Activated CD4-positive, alpha-beta T cell treated with anti-CD3 and anti-CD28 coated beads, Interleukin-2, amount 10 ng/mL, durations not matched to agents 24 days and 14 days (primary cell): ENCODE measurements at regions of chr5 and their contacts with region 1.

Region 1: DNA sequence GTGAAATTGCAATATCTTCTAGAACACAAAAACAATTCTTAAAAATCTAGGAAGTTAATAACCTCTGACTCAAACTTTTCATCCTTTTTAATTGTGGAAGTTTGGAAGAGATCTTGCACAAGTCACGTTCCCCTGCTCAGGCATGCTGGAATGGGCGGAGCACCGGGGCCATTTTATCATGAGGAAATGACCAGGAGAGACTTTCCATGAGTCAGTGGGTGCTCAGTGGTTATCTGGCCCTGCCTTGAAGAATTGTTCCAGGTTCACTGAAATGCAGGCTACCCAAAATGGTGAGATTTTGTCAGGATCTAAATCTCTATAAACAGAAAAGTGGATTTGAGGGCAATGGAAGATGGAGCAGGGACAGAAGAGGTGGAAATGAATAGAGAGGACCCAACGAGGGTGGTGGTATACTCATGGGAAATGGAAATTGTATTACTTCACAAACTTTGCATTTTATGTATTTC is 61.2 kb downstream of the FYB1 start:
- DNase-seq: peak; percentile 54
- H3K4me3 Mint-ChIP-seq: no peak overlapping the region
- H3K27ac Mint-ChIP-seq: peak overlapping the region; percentile 62
- H3K4me1 Mint-ChIP-seq: peaks cover 57% of the 10 kb centered on the region
- H3K27me3 Mint-ChIP-seq: no peaks in the 10 kb centered on the region

Region 2: DNA sequence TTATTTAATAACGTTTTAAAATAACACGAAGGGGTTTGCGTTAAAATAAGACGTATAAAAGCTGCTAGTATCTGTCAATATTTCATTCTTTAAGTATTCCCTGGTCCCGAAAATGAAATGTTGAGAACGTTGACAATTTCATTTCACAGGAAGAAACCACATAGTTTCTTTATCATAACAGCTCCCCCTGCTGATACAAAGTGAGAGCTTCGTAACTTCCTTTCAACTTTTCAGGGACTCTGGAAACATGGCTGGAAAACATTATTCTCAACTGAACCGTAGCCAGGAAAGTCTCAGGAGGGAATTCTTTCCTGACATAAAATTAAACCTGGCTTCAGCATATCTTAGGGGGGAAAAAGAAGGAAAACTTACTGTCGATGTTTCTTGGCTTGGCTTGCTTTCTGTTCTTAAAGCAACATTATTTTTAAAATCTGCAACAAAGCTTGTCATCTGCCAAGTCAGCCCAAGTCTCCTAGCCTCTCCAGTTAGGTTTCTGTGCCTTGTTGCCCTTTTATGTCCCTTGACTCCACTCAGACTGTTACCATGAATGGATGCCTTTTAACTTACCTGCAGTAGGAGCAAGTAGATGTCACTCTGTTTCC is 389.5 kb after region 1 on chr5:
- intact Hi-C with region 1: loop called (anchors 10 kb)
- DNase-seq: peak; percentile 73
- H3K4me3 Mint-ChIP-seq: no peak overlapping the region
- H3K27ac Mint-ChIP-seq: no peak overlapping the region
- H3K4me1 Mint-ChIP-seq: peaks cover 2% of the 10 kb centered on the region
- H3K27me3 Mint-ChIP-seq: peaks cover 17% of the 10 kb centered on the region